ENCODE measurements at regions of chr6 and their contacts with region 1.

Region 1: DNA sequence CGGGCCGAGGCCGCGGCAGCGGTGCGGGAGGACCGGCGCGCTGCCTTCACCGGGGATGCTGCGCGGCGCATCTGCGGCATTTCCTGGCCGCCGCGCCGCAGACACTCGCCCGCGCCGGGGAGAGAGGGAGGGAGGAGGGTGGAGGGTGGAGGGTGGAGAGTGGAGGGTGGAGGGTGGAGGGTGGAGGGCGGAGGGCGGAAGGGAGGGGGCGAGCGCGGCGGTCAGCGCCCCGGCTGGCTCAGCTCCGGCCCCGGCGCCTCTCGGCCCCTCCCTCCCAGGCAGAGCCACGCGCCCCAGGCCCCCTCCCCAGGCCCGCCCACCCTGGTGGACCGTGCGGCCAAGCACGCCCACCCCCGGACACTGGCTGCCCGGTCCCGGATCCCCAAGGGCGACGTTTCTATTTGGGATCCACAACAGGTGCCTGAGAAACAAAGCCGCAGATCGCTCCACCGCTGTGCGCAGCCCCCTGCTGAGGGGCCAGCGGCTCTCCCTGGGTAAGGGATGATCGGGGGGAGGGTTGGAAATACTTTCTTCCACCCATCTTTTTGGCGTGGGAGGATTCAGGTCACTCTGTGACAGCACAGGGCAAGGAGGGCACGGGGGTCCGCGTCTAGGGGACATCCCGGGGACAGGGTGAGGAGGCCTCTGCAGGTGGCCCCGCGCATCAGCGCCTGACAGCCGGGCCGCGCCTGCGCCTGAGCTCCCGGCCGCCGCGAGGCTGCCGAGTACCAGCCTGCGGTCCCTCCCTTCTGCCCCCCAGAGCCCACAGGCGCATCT is 111.1 kb upstream of the BEND6 start:
- DNase-seq: peak; percentile 78
- ATAC-seq: peak; percentile 91
- H3K4me3 ChIP-seq: peak overlapping the region; percentile 87 to 91
- H3K27ac ChIP-seq: peak overlapping the region; percentile 97
- H3K4me1 ChIP-seq: peaks cover 28 to 53% of the 10 kb centered on the region in 2 experiments
- H3K27me3 ChIP-seq: no peaks in the 10 kb centered on the region
- CTCF ChIP-seq: peak in 2 of 3 experiments; percentile 43 to 72; a peak in 3 of 6 replicates
- POLR2A ChIP-seq: no peak
- RAD21 ChIP-seq: peak; percentile 52

Region 2: DNA sequence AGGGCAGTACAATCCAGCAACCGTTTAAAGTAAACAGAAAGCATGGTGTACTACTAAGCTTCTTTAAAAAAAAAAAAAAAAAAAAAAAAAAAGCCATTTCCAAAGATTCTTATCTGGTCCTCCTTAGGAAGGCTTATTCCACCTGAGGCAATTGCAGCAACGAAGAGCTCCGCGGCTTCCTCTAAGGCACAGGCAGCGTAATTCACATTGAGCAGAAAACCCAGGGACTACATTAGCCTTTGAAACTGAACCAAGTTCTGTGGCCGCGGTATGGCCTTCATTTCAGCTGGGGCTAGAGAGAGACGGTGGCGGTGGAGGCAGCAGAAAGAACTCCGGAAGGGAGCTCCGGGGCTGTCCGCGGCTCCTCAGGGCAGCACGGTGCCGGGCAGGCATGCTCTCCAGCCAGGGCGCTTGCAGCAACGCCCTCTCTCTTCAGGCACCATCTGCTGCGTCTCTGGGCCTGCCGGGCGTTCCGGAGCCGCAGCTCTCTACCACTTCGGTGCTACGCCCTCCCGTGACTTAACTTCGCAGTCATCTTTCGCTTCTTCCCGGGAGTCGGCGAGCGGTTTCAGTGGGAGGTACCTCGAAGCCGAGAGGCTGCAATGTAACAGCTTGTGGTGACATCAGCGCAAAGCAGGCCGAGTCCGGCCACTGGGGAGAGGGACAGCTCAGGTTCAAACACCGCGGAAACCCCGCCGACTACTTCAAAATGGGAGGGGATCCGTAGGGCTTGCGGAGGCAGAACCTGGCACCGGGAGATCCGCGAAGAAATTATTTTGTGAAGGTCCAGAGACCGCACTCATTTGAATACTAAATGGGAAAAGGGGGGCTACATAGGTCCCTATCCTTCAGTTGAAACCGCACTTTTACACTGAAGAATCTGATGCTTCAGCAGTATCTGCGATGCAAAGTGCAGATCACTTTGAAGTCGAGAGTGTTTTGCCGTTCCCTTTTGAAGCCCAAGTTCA is 301.1 kb before region 1 on chr6:
- CTCF ChIA-PET with region 1: no interaction called
- POLR2A ChIA-PET with region 1: no interaction called
- RAD21 ChIA-PET with region 1: no interaction called
- intact Hi-C with region 1: loop called (anchors 10 kb)
- DNase-seq: peak; percentile 92
- ATAC-seq: peak; percentile 99
- H3K4me3 ChIP-seq: peak overlapping the region; percentile 61 to 71
- H3K27ac ChIP-seq: peak overlapping the region; percentile 62
- H3K4me1 ChIP-seq: peaks cover 3 to 15% of the 10 kb centered on the region in 2 experiments; a peak in 3 of 4 replicates
- H3K27me3 ChIP-seq: no peaks in the 10 kb centered on the region
- CTCF ChIP-seq: no peak
- POLR2A ChIP-seq: peak; percentile 61
- RAD21 ChIP-seq: no peak

Region 3: DNA sequence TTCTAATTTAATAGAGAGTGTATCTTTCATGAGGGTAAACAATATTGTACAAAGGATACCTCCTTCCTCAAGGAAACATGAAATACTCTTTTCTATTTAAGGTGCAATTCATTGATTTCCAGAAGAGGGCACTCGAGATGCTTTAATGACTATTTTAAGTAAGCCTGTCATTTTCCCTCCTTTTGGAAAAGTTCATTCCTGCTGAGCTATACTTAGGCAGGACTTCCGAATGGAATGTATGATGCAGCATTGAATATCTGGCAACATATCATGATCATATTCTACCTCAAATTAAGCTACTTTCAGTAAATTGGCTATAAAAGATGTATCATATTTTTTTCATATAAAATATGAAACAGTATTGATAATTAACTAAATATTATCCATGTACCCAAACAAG is 206.1 kb before region 1 on chr6:
- CTCF ChIA-PET with region 1: interaction called, 3 read pairs
- POLR2A ChIA-PET with region 1: no interaction called
- RAD21 ChIA-PET with region 1: no interaction called
- intact Hi-C with region 1: loop called (anchors 5 kb)
- DNase-seq: peak; percentile 49
- ATAC-seq: peak; percentile 70
- H3K4me3 ChIP-seq: no peak overlapping the region
- H3K27ac ChIP-seq: no peak overlapping the region; the same call in 1 of the 2 replicates
- H3K4me1 ChIP-seq: peaks cover 4% of the 10 kb centered on the region in 2 experiments
- H3K27me3 ChIP-seq: no peaks in the 10 kb centered on the region
- CTCF ChIP-seq: peak; percentile 28 to 69 (median 60); a peak in 4 of 6 replicates
- POLR2A ChIP-seq: no peak
- RAD21 ChIP-seq: peak; percentile 80

Region 4: DNA sequence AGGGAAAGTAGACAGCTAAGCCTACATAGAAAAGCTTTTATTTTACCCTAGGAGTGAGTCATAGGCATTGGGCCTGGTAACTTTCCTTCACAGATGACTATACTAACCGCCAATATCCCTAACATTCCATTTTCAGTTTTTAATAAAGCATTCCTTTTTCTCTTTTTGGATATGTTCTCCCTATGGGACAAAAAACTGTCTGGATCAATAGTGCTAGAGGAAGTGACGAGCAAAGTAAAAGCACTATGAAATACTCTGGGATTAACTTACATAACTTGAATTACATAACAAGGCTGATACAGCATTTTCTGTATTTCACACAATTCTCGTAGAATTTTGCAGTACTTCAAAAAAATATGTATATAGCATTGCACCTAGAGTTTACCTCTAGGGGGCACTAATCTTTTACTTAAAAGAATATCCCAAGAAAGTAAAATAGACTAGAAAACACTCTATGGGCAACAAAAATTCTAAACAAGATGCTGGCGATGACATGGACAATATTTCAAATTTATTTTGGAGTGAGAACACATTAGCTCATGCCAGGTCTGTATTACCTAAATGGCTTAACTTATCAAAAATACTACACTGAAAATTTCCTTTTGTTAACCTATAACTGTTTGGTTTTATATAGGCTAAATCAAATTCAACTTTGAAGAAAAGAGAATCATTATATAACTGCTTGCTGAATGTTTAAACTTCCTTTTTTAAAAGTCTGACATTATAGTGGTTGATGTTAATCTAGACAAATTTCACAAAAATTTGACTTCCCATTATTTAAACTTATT is 134.8 kb before region 1 on chr6:
- CTCF ChIA-PET with region 1: interaction called, 5 read pairs
- POLR2A ChIA-PET with region 1: no interaction called
- RAD21 ChIA-PET with region 1: no interaction called
- intact Hi-C with region 1: loop called (anchors 2 kb)
- DNase-seq: peak; percentile 66
- ATAC-seq: no peak
- H3K4me3 ChIP-seq: no peak overlapping the region; a peak in 1 of 4 replicates
- H3K27ac ChIP-seq: peak overlapping the region; percentile 74
- H3K4me1 ChIP-seq: peaks cover 54 to 83% of the 10 kb centered on the region in 2 experiments
- H3K27me3 ChIP-seq: no peaks in the 10 kb centered on the region
- CTCF ChIP-seq: peak; percentile 43 to 67 (median 64); a peak in 5 of 6 replicates
- POLR2A ChIP-seq: no peak
- RAD21 ChIP-seq: peak; percentile 71

Region 5: GRCh38 chr6:56814308-56814707 is 29.5 kb before region 1 on chr6:
- CTCF ChIA-PET with region 1: no interaction called
- POLR2A ChIA-PET with region 1: no interaction called
- RAD21 ChIA-PET with region 1: no interaction called
- intact Hi-C with region 1: no loop called
- DNase-seq: no peak
- ATAC-seq: no peak
- H3K4me3 ChIP-seq: no peak overlapping the region
- H3K27ac ChIP-seq: no peak overlapping the region
- H3K4me1 ChIP-seq: peaks cover 9 to 14% of the 10 kb centered on the region in 2 experiments
- H3K27me3 ChIP-seq: no peaks in the 10 kb centered on the region
- CTCF ChIP-seq: no peak
- POLR2A ChIP-seq: no peak
- RAD21 ChIP-seq: no peak

Measured in HCT116 (cell line).